WTC11 (cell line): ENCODE measurements at regions of chrX and their contacts with region 1.

Region 1: DNA sequence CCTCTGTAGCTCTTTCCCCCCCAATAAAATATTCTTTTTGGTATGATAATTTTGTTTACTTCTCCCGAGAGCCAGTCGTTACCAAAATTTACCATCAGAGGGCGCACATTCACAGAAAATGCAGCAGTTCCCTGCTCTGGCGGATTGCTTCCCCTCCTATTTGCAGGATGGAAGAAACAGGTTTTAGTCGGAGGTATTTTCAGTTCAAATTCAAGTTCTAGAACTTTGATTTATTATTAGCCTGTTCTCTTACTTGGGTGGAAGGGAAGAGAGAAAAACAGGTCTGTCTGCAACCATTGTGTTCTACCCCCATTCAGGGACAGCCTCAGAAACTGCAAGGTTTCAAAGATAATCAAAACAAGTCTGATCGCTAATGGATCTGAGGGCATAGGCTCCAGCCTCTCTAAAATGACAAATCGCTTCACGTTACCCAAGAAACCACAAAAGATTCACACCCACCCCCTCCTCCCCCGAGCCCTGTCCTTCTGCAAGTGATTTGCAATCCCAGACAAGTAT is 263.8 kb upstream of the RPS6KA3 start:
- DNase-seq: peak; percentile 55
- ATAC-seq: peak; percentile 51; the same call in 1 of the 2 replicates
- H3K4me3 Mint-ChIP-seq: peak overlapping the region; percentile 31
- H3K27ac Mint-ChIP-seq: no peak overlapping the region
- H3K4me1 Mint-ChIP-seq: peaks cover 11% of the 10 kb centered on the region
- H3K27me3 Mint-ChIP-seq: peaks cover 10% of the 10 kb centered on the region
- CTCF ChIP-seq: peak; percentile 53

Region 2: DNA sequence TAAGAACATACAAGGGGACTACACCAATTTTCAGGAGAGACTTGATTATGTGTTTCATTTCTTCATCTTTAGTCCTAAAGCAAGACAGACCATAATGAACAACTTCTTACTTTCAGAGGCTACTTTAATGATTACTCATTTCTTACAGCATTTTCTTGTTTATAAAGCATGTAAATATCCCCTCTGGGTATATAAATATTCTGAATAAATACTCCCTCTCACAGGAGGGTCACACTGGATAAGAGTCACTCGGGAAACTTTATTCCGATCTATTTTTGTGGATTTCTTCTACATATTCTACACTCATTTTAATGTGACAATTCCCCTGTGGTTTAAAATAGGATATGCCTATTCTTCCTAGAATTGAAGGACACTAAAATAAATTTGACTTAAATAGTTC is 34.9 kb before region 1 on chrX:
- CTCF ChIA-PET with region 1: no interaction called
- POLR2A ChIA-PET with region 1: no interaction called
- DNase-seq: no peak
- ATAC-seq: no peak
- H3K4me3 Mint-ChIP-seq: no peak overlapping the region
- H3K27ac Mint-ChIP-seq: no peak overlapping the region
- H3K4me1 Mint-ChIP-seq: no peaks in the 10 kb centered on the region
- H3K27me3 Mint-ChIP-seq: no peaks in the 10 kb centered on the region
- CTCF ChIP-seq: no peak

Region 3: DNA sequence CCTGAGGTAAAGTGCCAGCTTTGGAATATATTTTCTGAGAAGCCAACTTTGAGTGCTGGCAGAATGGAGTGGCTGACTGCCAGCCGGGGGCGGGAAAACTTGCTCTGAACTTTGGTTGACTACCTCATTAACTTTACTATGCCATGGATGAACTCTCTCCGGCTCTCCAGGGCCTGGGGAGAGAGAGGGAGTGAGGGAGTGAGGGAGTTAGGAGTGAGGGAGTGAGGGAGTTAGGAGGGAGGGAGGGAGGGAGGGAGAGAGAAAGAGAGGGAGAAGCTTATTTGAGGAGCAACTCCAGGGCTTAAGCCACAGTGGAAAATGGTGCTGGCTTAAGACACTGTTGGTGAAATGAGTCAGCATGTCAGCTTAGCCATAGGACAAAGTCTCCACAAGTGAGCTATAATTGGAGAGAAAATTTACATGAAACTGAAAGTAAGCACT is 17.2 kb after region 1 on chrX:
- CTCF ChIA-PET with region 1: no interaction called
- POLR2A ChIA-PET with region 1: no interaction called
- DNase-seq: no peak
- ATAC-seq: no peak
- H3K4me3 Mint-ChIP-seq: no peak overlapping the region
- H3K27ac Mint-ChIP-seq: no peak overlapping the region
- H3K4me1 Mint-ChIP-seq: no peaks in the 10 kb centered on the region
- H3K27me3 Mint-ChIP-seq: no peaks in the 10 kb centered on the region
- CTCF ChIP-seq: no peak

Region 4: DNA sequence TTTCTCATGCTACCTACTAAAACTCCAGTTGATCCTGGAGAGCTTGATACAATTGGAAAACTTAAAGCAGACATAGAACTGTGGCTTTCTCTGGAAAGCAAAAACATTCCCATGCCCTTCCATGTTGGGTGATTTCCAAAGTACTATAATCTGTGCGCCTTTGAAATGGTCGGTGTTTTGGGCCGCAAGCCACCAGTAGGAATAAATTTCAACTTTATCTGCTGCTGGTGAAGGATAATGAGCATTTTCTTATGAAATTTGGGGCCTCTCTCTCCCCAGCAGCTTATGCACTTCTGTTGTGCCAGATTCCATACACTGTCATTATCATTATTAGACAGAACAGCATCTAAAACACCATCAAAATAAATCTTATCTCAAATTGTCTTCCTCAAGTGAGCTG is 103.0 kb after region 1 on chrX:
- CTCF ChIA-PET with region 1: no interaction called
- POLR2A ChIA-PET with region 1: no interaction called
- DNase-seq: no peak
- ATAC-seq: no peak
- H3K4me3 Mint-ChIP-seq: no peak overlapping the region
- H3K27ac Mint-ChIP-seq: no peak overlapping the region
- H3K4me1 Mint-ChIP-seq: no peaks in the 10 kb centered on the region
- H3K27me3 Mint-ChIP-seq: no peaks in the 10 kb centered on the region
- CTCF ChIP-seq: no peak

Region 5: DNA sequence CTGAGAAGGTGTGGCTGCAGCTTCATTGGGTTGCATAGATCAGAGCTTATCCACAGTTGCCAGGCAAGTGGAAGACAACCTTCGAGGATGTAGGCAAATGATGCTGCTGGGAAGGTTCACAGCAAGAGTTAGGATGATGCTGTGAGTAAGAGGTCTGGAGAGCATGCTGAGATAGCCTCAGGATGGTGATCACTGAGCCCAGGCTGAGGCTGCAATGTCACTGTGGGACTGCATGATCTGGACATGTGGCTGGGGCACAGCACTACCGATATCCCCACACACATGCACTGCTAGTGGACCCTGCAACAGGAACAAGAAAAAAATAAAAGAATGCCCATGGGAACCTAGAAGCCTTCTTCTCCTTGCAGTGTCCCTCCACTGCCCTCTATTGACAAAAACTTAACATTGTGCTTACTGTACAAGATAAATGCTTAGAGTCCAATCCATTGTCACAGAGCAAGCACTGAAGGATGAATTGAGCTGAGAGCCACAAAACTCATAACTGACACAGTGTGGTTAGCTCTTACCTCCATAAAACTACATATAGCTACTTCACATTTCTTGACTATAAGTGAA is 949.3 kb after region 1 on chrX:
- CTCF ChIA-PET with region 1: interaction called, 10 read pairs
- POLR2A ChIA-PET with region 1: no interaction called
- DNase-seq: no peak
- ATAC-seq: peak; percentile 76
- H3K4me3 Mint-ChIP-seq: no peak overlapping the region
- H3K27ac Mint-ChIP-seq: no peak overlapping the region
- H3K4me1 Mint-ChIP-seq: no peaks in the 10 kb centered on the region
- H3K27me3 Mint-ChIP-seq: no peaks in the 10 kb centered on the region
- CTCF ChIP-seq: peak; percentile 32; the same call in 1 of the 2 replicates

Region 6: GRCh38 chrX:21725496-21725895 is 1195.0 kb after region 1 on chrX:
- CTCF ChIA-PET with region 1: interaction called, 18 read pairs
- POLR2A ChIA-PET with region 1: no interaction called
- DNase-seq: no peak
- ATAC-seq: peak; percentile 69
- H3K4me3 Mint-ChIP-seq: no peak overlapping the region
- H3K27ac Mint-ChIP-seq: no peak overlapping the region
- H3K4me1 Mint-ChIP-seq: peaks cover 3% of the 10 kb centered on the region; the same call in 1 of the 2 replicates
- H3K27me3 Mint-ChIP-seq: no peaks in the 10 kb centered on the region
- CTCF ChIP-seq: no peak